ENCODE measurements at regions of chr14 and their contacts with region 1.

Region 1: DNA sequence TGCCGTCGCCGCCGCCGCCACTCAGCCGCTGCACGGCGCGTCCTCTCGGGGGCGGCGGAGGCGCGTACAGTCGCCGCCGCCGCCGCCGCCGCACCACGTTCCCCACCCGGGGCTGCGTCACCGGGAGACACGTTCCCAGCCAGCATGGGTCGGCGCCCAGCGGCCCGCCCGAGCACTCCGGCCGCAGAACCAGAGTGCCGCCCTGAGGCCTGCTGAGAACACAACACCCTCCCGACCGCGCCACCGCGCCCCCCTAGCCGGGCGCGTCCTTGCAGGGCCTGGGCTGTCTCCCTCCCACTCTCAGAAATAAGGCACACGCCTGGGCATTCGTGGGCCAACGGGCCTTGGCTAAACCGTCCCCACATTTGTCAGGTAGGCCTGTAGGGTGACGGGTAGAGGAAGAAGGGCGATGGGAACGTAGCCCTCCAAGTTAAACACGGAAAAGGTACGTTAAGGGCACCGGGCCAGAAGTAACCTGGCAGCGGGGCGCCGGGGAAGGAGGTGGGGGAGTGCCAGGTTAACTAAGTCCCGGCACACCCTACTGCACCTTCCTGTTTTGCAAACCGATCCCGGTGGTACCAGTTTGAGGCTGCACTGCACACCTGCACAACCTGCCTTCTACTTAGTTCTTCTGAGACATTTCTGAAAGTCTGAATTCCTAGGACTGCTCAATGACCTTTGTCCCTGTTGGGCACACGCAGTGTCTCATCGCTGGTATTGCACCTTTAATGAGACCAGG is at the start of gene MAP4K5:
- DNase-seq: peak; percentile 85 to 89 (median 88)
- H3K4me3 ChIP-seq: peak within 1 kb of the TSS; percentile 26 to 68
- H3K4me3 Mint-ChIP-seq: peak within 1 kb of the TSS; percentile 88 to 94 (median 93)
- H3K27ac ChIP-seq: peak within 1 kb of the TSS; percentile 69
- H3K27ac Mint-ChIP-seq: peak within 1 kb of the TSS; percentile 85 to 95 (median 91)
- H3K4me1 ChIP-seq: peaks cover 46% of the 10 kb centered on the region
- H3K4me1 Mint-ChIP-seq: peaks cover 33 to 50% (median 43%) of the 10 kb centered on the region in 4 donors
- H3K27me3 ChIP-seq: no peaks in the 10 kb centered on the region
- H3K27me3 Mint-ChIP-seq: no peaks in the 10 kb centered on the region
- total RNA-seq, gene MAP4K5: 42.6 to 43.0 TPM

Region 2: DNA sequence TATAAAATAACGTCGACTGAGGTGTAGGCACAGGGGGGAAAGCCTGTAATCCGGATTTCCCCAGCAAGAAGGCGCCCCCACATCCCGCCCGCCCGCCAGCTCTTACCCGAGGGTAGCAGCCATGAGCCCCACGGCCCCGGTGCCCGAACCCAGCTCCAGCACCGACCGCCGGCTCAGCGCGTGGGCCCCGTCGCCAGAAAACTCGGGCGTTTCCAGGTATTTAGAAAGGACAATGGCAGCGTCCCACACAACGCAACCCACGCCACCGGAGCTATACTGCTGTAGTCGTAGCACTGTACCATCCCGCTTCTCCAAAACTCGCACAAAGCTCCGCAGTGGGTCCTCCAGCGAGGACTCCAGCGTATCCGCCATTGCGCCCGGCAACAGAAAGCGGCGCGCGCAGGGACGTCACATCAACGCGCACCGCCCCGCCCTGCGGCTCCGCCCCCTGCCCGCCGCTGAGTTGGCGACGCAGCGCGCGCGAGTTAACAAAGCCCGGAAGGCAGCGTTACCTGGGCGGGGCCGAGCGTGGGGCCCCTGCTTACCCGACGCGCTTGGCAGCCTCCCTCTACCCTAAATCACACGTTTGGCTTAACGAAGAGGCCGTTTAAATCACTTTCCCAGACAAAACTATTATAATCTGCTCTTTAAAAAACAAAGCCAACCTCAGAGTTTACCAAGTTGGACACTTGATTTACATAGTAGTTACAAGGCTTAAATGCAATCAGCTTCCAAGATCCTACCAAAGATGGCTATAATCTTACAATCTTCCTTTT is 416.3 kb before region 1 on chr14 and contains the start of gene VCPKMT:
- CTCF ChIA-PET with region 1: no interaction called
- POLR2A ChIA-PET with region 1: no interaction called
- intact Hi-C with region 1: loop called (anchors 2 kb)
- DNase-seq: peak; percentile 93 to 96 (median 95)
- H3K4me3 ChIP-seq: peak within 1 kb of the TSS; percentile 65 to 69
- H3K4me3 Mint-ChIP-seq: peak within 1 kb of the TSS; percentile 97 to 98 (median 98)
- H3K27ac ChIP-seq: peak within 1 kb of the TSS; percentile 93
- H3K27ac Mint-ChIP-seq: peak within 1 kb of the TSS; percentile 96 to 100 (median 99)
- H3K4me1 ChIP-seq: peaks cover 34% of the 10 kb centered on the region
- H3K4me1 Mint-ChIP-seq: peaks cover 10 to 32% (median 23%) of the 10 kb centered on the region in 4 donors
- H3K27me3 ChIP-seq: no peaks in the 10 kb centered on the region
- H3K27me3 Mint-ChIP-seq: no peaks in the 10 kb centered on the region
- total RNA-seq, gene VCPKMT: 17.3 to 20.1 TPM

Region 3: DNA sequence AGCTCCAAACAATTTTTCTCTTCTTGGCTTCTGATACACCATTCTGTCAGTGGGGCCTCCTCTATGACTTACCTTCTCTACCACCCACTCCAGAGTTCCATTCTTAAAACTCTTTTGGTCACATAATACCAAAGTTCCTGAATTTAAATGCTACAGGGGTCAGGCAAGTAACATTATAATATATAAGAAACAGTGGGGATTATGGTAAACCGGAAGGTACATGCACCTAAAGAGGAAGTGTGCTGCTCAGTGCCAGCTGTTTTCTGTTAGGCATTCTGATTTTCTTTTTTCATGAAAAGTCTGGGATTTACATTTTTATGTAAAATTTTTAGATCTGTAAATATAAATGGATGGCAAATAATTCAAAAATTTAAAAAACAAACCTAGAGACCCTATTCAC is 341.2 kb before region 1 on chr14:
- CTCF ChIA-PET with region 1: no interaction called
- POLR2A ChIA-PET with region 1: no interaction called
- intact Hi-C with region 1: no loop called
- DNase-seq: no peak
- H3K4me3 ChIP-seq: no peak overlapping the region
- H3K4me3 Mint-ChIP-seq: no peak overlapping the region
- H3K27ac ChIP-seq: no peak overlapping the region
- H3K27ac Mint-ChIP-seq: peak overlapping the region in 1 of 7 donors; percentile 57
- H3K4me1 ChIP-seq: no peaks in the 10 kb centered on the region
- H3K4me1 Mint-ChIP-seq: peaks cover 0 to 1% (median under 1%) of the 10 kb centered on the region in 4 donors
- H3K27me3 ChIP-seq: no peaks in the 10 kb centered on the region
- H3K27me3 Mint-ChIP-seq: no peaks in the 10 kb centered on the region

Region 4: GRCh38 chr14:50667996-50668825 is 135.5 kb after region 1 on chr14 and contains the start of gene SAV1:
- CTCF ChIA-PET with region 1: interaction called, 3 read pairs
- POLR2A ChIA-PET with region 1: no interaction called
- intact Hi-C with region 1: loop called (anchors 1 kb)
- DNase-seq: peak; percentile 41 to 50 (median 45)
- H3K4me3 ChIP-seq: peak within 1 kb of the TSS; percentile 48 to 70
- H3K4me3 Mint-ChIP-seq: peak within 1 kb of the TSS in 2 of 8 donors; percentile 94 to 96
- H3K27ac ChIP-seq: peak within 1 kb of the TSS; percentile 52
- H3K27ac Mint-ChIP-seq: peak within 1 kb of the TSS in 6 of 7 donors; percentile 89 to 95 (median 92)
- H3K4me1 ChIP-seq: peaks cover 19% of the 10 kb centered on the region
- H3K4me1 Mint-ChIP-seq: peaks cover 14 to 20% (median 20%) of the 10 kb centered on the region in 4 donors
- H3K27me3 ChIP-seq: no peaks in the 10 kb centered on the region
- H3K27me3 Mint-ChIP-seq: no peaks in the 10 kb centered on the region
- total RNA-seq, gene SAV1: 13.9 to 14.5 TPM

Region 5: DNA sequence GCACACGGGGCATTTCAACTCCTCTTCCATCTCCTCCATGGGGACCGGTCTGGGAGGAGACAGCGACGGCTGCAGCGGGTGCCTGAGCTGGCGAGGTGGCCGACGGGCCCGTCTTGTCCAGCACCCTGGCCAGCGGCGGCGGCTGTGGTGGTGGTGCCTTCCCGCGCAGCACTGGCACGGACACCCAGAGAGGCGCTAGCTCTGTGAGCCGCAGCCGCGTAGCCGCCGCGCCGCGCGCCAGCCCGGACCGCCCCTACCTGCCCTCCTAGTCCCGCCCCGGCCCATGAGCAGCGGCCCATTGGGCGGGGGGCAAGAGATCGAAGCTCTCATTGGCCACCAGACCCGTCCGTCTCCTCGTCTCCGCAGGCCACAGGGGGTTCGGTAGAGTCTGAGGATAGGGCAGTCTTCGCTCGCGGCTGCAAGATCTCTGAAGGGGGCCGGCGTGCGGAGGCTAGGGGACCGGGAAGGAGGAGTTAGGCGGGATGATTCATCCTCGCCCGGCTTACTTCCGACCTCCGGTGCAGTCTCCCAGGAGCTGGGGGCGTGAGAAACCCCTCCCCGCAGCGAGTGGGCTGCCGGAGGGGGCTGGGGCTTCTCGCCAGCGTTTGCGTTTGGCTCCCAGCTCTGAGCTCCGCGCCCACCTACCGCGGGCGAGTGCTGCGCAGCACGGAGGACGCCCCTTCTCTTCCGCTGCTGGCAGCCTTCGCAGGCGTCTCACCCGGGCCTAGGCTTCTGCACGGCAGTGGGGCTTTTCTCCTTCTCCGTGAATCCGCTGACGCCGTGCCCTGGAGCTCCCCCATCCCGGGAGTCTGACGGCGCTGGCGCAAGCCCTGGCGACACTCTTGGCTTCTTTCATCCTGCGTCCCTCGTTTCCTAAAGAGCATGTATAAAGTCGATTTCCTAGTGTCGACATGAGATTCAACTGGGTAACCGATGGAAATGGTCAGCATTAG is 562.5 kb after region 1 on chr14 and contains the start of gene TRIM9:
- CTCF ChIA-PET with region 1: no interaction called
- POLR2A ChIA-PET with region 1: no interaction called
- intact Hi-C with region 1: loop called (anchors 2 kb)
- DNase-seq: peak; percentile 86 to 90 (median 86)
- H3K4me3 ChIP-seq: peak within 1 kb of the TSS; percentile 42 to 51
- H3K4me3 Mint-ChIP-seq: peak within 1 kb of the TSS; percentile 90 to 96 (median 94)
- H3K27ac ChIP-seq: peak within 1 kb of the TSS; percentile 23
- H3K27ac Mint-ChIP-seq: peak within 1 kb of the TSS in 6 of 7 donors; percentile 63 to 89 (median 82)
- H3K4me1 ChIP-seq: peaks cover 18% of the 10 kb centered on the region
- H3K4me1 Mint-ChIP-seq: peaks cover 12 to 31% (median 13%) of the 10 kb centered on the region in 4 donors
- H3K27me3 ChIP-seq: peaks cover 8% of the 10 kb centered on the region
- H3K27me3 Mint-ChIP-seq: peaks cover 5 to 20% of the 10 kb centered on the region in 2 donors
- total RNA-seq, gene TRIM9: 0.44 to 0.55 TPM

Measured in CD4-positive, alpha-beta memory T cell (primary cell).